Calu3 (cell line): ENCODE measurements at regions of chr19 and their contacts with region 1.

Region 1: GRCh38 chr19:49200238-49200862 is 42.8 kb downstream of the TRPM4 start:
- DNase-seq: no peak
- H3K4me3 Mint-ChIP-seq: no peak overlapping the region
- H3K27ac Mint-ChIP-seq: no peak overlapping the region
- H3K4me1 Mint-ChIP-seq: peaks cover 7% of the 10 kb centered on the region
- H3K27me3 Mint-ChIP-seq: no peaks in the 10 kb centered on the region
- CTCF ChIP-seq: no peak

Region 2: GRCh38 chr19:49118565-49119410 is 81.6 kb before region 1 on chr19 and contains the start of gene C19orf73:
- CTCF ChIA-PET with region 1: interaction called, 23 read pairs
- intact Hi-C with region 1: loop called (anchors 5 kb)
- DNase-seq: peak; percentile 98
- H3K4me3 Mint-ChIP-seq: peak within 1 kb of the TSS; percentile 93
- H3K27ac Mint-ChIP-seq: peak within 1 kb of the TSS; percentile 56
- H3K4me1 Mint-ChIP-seq: peaks cover 35% of the 10 kb centered on the region
- H3K27me3 Mint-ChIP-seq: peaks cover 37% of the 10 kb centered on the region
- CTCF ChIP-seq: peak; percentile 32
- total RNA-seq, gene C19orf73: 1.9 and 2.0 TPM in 2 replicates

Region 3: DNA sequence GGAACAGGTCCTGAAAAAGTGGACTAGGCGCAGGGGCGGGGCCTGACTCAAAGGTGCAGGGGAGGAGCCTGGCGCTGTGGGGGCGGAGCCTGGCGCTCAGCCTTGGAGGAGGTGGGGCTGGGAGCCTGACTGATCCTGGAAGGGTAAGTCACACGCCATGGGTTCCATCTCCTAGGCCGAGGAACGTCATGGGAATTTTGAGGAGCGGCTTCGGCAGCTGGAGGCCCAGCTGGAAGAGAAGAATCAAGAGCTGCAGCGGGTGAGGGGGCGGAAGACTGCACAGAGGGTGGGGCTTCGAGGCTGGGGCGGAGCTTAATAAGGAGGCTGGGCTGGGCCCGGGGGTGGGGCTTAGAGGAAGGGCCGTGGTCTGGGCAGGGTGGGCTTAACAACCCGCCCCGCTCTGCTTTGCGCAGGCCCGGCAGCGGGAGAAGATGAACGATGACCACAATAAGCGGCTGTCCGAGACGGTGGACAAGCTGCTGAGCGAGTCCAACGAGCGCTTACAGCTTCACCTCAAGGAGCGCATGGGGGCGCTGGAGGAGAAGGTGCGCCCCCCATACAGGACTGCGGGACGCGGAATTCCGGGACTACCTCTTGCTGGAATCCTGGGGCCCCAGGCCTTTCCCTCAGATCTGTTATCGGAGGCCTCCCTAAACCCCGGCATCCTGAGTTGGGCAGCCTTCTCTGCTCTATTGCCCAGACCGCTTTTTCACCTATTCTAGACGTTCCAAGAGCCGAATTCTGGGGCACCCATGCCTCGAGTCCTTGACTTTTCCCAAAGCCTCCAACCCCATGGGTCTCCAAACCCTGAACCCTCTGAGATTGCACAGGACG is 66.5 kb before region 1 on chr19:
- CTCF ChIA-PET with region 1: interaction called, 12 read pairs
- intact Hi-C with region 1: no loop called
- DNase-seq: peak; percentile 60
- H3K4me3 Mint-ChIP-seq: peak overlapping the region; percentile 58
- H3K27ac Mint-ChIP-seq: no peak overlapping the region
- H3K4me1 Mint-ChIP-seq: peaks cover 2% of the 10 kb centered on the region
- H3K27me3 Mint-ChIP-seq: no peaks in the 10 kb centered on the region
- CTCF ChIP-seq: no peak

Region 4: DNA sequence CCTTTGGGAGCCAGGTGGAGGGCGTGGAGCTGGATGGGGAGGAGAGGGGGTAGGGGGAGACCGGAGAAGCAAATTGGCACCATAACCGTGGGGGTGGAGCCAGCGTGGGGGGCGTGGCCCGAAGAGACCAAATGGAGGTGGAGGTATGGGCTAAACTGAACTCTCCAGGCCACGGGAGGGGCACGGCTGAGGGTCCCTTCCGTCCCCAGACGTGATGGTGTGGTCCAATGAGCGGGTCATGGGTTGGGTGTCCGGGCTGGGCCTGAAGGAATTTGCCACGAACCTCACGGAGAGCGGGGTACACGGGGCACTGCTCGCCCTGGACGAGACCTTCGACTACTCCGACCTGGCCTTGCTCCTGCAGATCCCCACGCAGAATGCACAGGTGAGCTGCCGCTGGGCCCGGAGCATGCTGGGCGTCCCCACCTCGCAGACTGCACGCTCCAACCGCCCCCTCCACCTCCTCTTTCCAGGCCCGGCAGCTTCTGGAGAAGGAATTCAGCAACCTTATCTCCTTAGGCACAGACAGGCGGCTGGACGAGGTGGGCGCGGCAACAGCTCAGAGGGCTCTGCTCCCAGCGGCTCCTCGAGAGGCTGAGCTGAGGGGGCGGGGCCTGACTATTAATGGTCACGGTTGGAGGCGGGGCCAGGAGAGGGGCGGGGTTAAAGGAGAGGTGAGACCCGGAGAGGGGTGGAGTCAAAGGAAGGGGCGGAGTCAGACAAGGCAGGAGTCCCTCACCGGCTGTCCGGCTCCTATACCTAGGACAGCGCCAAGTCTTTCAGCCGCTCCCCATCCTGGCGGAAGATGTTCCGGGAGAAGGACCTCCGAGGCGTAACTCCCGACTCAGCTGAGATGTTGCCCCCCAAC is 51.3 kb before region 1 on chr19:
- CTCF ChIA-PET with region 1: interaction called, 22 read pairs
- intact Hi-C with region 1: no loop called
- DNase-seq: peak; percentile 100
- H3K4me3 Mint-ChIP-seq: peak overlapping the region; percentile 71
- H3K27ac Mint-ChIP-seq: peak overlapping the region; percentile 11
- H3K4me1 Mint-ChIP-seq: peaks cover 18% of the 10 kb centered on the region
- H3K27me3 Mint-ChIP-seq: peaks cover 62% of the 10 kb centered on the region
- CTCF ChIP-seq: no peak